CD4-positive, alpha-beta memory T cell (primary cell): ENCODE measurements at regions of chr18 and their contacts with region 1.

Region 1: GRCh38 chr18:5365443-5365842 is 69.9 kb upstream of the ZBTB14 start:
- DNase-seq: no peak
- H3K4me3 ChIP-seq: no peak overlapping the region
- H3K4me3 Mint-ChIP-seq: no peak overlapping the region
- H3K27ac ChIP-seq: no peak overlapping the region
- H3K27ac Mint-ChIP-seq: no peak overlapping the region
- H3K4me1 ChIP-seq: no peaks in the 10 kb centered on the region
- H3K4me1 Mint-ChIP-seq: no peaks in the 10 kb centered on the region
- H3K27me3 ChIP-seq: no peaks in the 10 kb centered on the region
- H3K27me3 Mint-ChIP-seq: peaks cover 5 to 7% of the 10 kb centered on the region in 2 donors

Region 2: DNA sequence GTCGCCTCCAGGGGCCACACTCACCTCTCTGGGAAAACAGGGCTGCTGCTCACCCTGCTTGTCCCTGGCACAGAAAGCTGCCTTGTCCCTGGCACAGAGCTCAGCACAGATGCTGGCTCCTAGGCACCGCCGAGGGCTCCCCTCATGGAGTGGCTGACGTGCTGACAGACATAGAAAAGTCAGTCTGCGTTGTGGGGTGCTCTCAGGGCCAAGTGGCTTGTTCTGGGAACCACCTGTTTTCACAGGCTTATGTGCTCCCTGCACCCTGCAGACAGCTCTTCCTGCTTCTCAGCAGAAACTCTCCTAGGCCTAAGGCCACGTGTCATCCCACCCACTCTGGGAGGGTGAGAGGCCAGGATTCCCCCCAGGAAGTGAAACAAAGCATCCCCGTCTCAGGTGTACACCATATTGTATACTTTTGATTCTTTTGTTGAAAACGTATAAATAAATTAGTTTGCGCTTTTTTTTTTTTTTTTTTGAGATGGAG is 614.6 kb after region 1 on chr18:
- CTCF ChIA-PET with region 1: no interaction called
- POLR2A ChIA-PET with region 1: no interaction called
- intact Hi-C with region 1: loop called (anchors 10 kb)
- DNase-seq: no peak
- H3K4me3 ChIP-seq: no peak overlapping the region
- H3K4me3 Mint-ChIP-seq: no peak overlapping the region
- H3K27ac ChIP-seq: no peak overlapping the region
- H3K27ac Mint-ChIP-seq: no peak overlapping the region
- H3K4me1 ChIP-seq: no peaks in the 10 kb centered on the region
- H3K4me1 Mint-ChIP-seq: no peaks in the 10 kb centered on the region
- H3K27me3 ChIP-seq: no peaks in the 10 kb centered on the region
- H3K27me3 Mint-ChIP-seq: no peaks in the 10 kb centered on the region